ENCODE measurements at regions of chr1 and their contacts with region 1.

Region 1: DNA sequence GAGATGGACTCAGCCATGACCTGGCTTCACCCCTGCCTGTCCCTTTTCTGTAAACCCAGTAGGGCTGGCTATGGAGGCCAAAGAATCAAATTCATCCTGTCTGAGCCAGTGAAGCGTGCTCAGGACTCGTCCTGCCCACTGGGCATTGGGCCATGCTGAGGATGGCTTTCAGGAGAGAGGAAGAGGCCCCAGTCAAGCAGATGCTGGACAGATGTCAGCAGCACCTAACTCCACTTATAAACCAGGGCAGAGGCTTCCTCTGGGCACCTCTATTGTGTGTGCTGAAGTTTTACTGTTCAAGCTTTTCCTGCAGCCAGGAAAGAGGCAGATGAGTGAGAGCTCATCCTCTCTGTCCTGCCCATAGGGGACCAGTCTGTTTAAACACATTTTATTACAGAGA is 97.4 kb upstream of the GCLM start:
- DNase-seq: no peak
- ATAC-seq: no peak
- H3K4me3 ChIP-seq: no peak overlapping the region
- H3K4me3 Mint-ChIP-seq: no peak overlapping the region
- H3K27ac ChIP-seq: no peak overlapping the region
- H3K27ac Mint-ChIP-seq: no peak overlapping the region
- H3K4me1 ChIP-seq: no peaks in the 10 kb centered on the region
- H3K4me1 Mint-ChIP-seq: no peaks in the 10 kb centered on the region
- H3K27me3 ChIP-seq: no peaks in the 10 kb centered on the region
- H3K27me3 Mint-ChIP-seq: peaks cover 6% of the 10 kb centered on the region
- CTCF ChIP-seq: no peak

Region 2: DNA sequence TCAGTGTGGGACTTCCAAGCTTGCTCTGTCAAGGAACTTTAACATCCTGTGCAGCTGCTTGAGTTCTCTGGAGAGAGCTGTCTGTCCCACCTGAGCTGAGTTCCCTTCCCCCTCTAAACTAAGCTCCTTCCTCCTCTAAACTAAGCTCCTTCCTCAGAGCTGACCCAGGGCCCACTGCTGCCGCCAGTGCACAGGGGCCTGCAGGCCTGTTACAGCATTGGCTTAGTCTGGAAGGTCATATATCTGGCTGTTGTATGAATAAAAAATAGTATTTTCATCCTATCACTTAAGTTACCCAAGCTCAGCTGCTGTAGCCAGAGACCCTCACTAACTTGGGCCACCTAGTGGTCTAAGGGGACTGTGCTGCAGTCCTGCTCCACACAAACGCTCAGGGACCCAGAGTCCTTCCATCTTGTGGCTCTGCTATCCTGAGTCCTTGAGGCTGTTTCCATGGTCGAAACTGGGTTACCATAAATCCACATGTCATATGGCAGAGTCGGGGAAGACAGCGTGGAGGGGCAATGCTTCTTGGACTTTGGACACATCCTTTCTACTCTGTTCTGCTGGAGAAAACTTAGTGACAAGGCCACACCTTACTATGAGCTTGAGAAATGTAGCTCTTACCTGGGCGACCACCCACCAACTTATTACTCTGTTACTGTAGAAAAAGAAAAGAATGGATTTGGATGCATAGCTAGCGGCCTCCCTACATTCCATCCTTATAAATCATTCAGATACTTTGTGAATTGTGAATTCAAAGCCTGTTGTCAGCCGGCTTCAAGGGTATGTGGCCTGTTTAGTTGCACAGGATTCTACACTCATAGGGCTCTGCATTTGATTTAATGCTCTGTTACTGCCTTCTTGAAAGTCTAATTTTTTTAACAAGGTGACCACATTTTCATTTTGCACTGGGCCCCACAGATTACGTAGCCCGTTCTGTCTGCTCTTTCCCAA is 26.0 kb before region 1 on chr1:
- CTCF ChIA-PET with region 1: no interaction called
- POLR2A ChIA-PET with region 1: no interaction called
- intact Hi-C with region 1: loop called in 1 of 2 experiments (anchors 1 kb)
- DNase-seq: no peak
- ATAC-seq: no peak
- H3K4me3 ChIP-seq: no peak overlapping the region
- H3K4me3 Mint-ChIP-seq: no peak overlapping the region
- H3K27ac ChIP-seq: no peak overlapping the region
- H3K27ac Mint-ChIP-seq: no peak overlapping the region
- H3K4me1 ChIP-seq: no peaks in the 10 kb centered on the region
- H3K4me1 Mint-ChIP-seq: no peaks in the 10 kb centered on the region
- H3K27me3 ChIP-seq: no peaks in the 10 kb centered on the region
- H3K27me3 Mint-ChIP-seq: peaks cover 7% of the 10 kb centered on the region
- CTCF ChIP-seq: no peak

Measured in CD8-positive, alpha-beta T cell (primary cell).